GM12878 (cell line): ENCODE measurements at regions of chr17 and their contacts with region 1.

Region 1: DNA sequence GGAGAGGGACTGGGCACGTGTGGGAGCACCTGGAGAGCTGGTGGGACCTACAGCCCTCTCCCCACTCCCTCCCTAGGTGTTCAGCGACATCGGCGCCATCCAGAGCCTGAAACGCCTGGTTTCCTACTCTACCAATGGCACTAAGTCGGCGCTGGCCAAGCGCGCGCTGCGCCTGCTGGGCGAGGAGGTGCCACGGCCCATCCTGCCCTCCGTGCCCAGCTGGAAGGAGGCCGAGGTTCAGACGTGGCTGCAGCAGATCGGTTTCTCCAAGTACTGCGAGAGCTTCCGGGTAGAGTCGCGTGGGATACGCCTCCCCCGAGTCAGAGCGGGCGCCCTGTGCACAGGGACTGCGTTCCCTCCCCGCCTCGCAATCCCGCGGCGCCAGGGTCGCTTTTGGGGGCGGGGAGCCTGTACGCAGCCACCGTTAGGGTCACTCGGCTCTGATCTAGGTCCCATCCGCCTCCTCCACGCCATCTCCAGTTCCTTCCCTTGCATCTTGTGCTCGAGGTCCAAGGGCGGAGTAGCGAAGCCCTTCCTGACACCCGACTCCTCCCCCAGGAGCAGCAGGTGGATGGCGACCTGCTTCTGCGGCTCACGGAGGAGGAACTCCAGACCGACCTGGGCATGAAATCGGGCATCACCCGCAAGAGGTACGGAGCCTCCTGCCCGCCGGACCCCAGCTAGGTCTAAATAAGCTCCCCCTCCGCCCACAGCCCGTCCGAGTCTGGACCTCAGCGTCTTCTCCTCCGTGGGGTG is 13.0 kb downstream of the SARM1 start:
- DNase-seq: no peak
- ATAC-seq: peak; percentile 90
- H3K4me3 ChIP-seq: peak overlapping the region; percentile 65
- H3K27ac ChIP-seq: 0 out of 2 replicates have a peak overlapping the region, but pooled peaks have one; percentile 1
- H3K4me1 ChIP-seq: no peaks in the 10 kb centered on the region
- H3K27me3 ChIP-seq: no peaks in the 10 kb centered on the region; a peak in 2 of 4 replicates
- CTCF ChIP-seq: no peak
- EP300 ChIP-seq: no peak
- POLR2A ChIP-seq: peak; percentile 91
- RAD21 ChIP-seq: no peak

Region 2: GRCh38 chr17:28467456-28468025 is 83.1 kb after region 1 on chr17:
- CTCF ChIA-PET with region 1: no interaction called
- POLR2A ChIA-PET with region 1: no interaction called
- RAD21 ChIA-PET with region 1: no interaction called
- SMC1A ChIA-PET with region 1: no interaction called
- in situ Hi-C with region 1: no loop called
- intact Hi-C with region 1: no loop called
- DNase-seq: no peak
- ATAC-seq: no peak
- H3K4me3 ChIP-seq: no peak overlapping the region; the same call in 1 of the 2 replicates
- H3K27ac ChIP-seq: no peak overlapping the region
- H3K4me1 ChIP-seq: peaks cover 34% of the 10 kb centered on the region
- H3K27me3 ChIP-seq: no peaks in the 10 kb centered on the region
- CTCF ChIP-seq: no peak
- EP300 ChIP-seq: no peak
- POLR2A ChIP-seq: no peak
- RAD21 ChIP-seq: no peak

Region 3: DNA sequence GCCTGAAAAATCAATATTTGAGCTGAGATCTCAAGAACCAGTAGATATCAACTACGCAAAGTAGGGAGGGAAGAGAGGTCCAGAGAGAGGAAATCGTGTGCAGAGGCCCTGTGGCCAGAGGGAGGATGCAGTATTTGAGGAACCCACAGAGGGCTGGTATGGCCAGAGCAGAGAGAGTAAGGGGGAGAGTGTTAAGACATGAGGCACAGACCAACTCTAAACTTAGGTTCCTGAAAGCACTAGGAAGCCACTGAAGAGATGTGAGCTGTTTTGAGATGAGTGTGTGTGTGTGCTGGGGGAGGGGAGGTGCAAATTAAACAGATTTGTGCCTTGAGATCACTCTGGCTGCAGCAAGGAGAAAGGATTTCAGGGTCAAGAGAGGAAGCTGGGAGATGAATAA is 99.8 kb after region 1 on chr17:
- CTCF ChIA-PET with region 1: no interaction called
- POLR2A ChIA-PET with region 1: no interaction called
- RAD21 ChIA-PET with region 1: no interaction called
- SMC1A ChIA-PET with region 1: no interaction called
- in situ Hi-C with region 1: no loop called
- intact Hi-C with region 1: loop called (anchors 5 kb)
- DNase-seq: peak; percentile 79
- ATAC-seq: peak; percentile 98
- H3K4me3 ChIP-seq: peak overlapping the region; percentile 33; the same call in 1 of the 2 replicates
- H3K27ac ChIP-seq: peak overlapping the region; percentile 89
- H3K4me1 ChIP-seq: peaks cover 25% of the 10 kb centered on the region
- H3K27me3 ChIP-seq: no peaks in the 10 kb centered on the region
- CTCF ChIP-seq: no peak
- EP300 ChIP-seq: peak; percentile 39 to 45; a peak in 1 of 4 replicates
- POLR2A ChIP-seq: peak; percentile 42; the same call in 1 of the 2 replicates
- RAD21 ChIP-seq: 0 out of 2 replicates have a peak, but pooled peaks have one; percentile 10